Prostate gland (tissue), 2 donors: ENCODE measurements at regions of chr17 and their contacts with region 1.

Region 1: DNA sequence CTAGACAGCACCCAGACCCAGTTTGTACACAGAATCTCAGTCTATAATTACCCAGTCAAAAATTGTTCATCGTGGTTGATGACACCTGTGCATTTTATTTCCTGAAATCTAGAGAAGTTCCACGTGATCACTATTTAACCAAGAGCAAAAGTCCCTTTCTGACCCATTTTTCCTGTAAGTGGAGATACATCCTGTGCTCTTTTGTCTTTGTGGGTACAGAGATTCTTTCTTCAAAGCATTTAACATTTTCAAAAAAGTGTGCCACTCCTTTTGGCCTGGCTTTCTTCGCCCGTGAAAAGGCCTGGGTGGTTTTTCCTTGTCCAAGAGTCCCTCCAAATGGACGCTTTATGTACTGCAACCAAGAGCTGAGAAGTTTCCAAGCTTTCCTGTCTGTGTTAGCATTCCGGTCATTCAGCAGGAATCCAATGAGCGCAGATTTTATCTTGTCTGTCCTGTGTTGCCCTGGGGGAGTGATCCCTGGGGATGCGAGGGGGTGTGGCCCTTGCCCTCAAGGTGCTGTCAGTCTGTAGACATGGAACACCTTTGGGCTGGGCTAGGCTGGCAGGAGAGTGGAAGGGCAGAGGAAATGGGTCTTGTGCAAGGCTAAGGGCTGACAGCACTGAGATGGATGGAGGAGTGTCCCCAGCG is 161.1 kb upstream of the CACNG5 start:
- DNase-seq: peak; percentile 73
- H3K4me3 ChIP-seq: no peak overlapping the region
- H3K27ac ChIP-seq: peak overlapping the region; percentile 89 to 94
- H3K4me1 ChIP-seq: peaks cover 9% of the 10 kb centered on the region
- H3K27me3 ChIP-seq: no peaks in the 10 kb centered on the region
- CTCF ChIP-seq: peak; percentile 41 to 88 (median 78)
- POLR2A ChIP-seq: no peak

Region 2: GRCh38 chr17:65561394-65562205 is 1112.2 kb before region 1 on chr17 and contains the start of gene AXIN2:
- intact Hi-C with region 1: loop called (anchors 10 kb)
- DNase-seq: peak; percentile 89
- H3K4me3 ChIP-seq: peak within 1 kb of the TSS in 1 of 2 donors; percentile 83
- H3K27ac ChIP-seq: peak within 1 kb of the TSS; percentile 94 to 96
- H3K4me1 ChIP-seq: peaks cover 2% of the 10 kb centered on the region
- H3K27me3 ChIP-seq: no peaks in the 10 kb centered on the region
- CTCF ChIP-seq: peak in 2 of 4 experiments; percentile 36 to 40
- POLR2A ChIP-seq: no peak
- total RNA-seq, gene AXIN2: 32.3 to 54.6 TPM

Region 3: DNA sequence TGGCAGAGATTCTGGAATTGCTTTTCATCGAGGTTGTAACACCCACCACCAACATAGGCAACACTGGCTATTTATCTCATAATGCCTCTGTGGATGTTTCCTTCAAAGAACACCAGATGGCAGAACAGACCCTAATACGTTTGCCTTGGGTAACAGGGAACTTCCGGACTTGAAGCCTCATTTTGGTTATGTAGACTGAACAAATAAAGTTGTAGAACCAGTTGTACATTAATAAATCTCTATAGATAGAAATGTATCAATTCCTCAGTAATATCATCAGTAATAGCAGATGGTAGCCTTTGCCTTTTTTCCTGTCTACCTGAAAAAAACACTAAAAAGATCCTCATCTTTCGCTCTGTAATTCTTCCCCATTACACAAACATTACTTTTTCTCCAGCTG is 418.7 kb before region 1 on chr17:
- intact Hi-C with region 1: loop called (anchors 5 kb)
- DNase-seq: peak; percentile 46
- H3K4me3 ChIP-seq: no peak overlapping the region
- H3K27ac ChIP-seq: no peak overlapping the region
- H3K4me1 ChIP-seq: no peaks in the 10 kb centered on the region
- H3K27me3 ChIP-seq: no peaks in the 10 kb centered on the region
- CTCF ChIP-seq: peak; percentile 47 to 83 (median 74)
- POLR2A ChIP-seq: no peak